GM12878 (cell line): ENCODE measurements at regions of chr7 and their contacts with region 1.

Region 1: GRCh38 chr7:106183952-106184351 is 71.8 kb upstream of the SYPL1 start:
- DNase-seq: no peak
- ATAC-seq: no peak
- H3K4me3 ChIP-seq: no peak overlapping the region
- H3K27ac ChIP-seq: no peak overlapping the region
- H3K4me1 ChIP-seq: peaks cover 12% of the 10 kb centered on the region
- H3K27me3 ChIP-seq: no peaks in the 10 kb centered on the region
- CTCF ChIP-seq: no peak
- EP300 ChIP-seq: no peak
- POLR2A ChIP-seq: no peak
- RAD21 ChIP-seq: no peak

Region 2: DNA sequence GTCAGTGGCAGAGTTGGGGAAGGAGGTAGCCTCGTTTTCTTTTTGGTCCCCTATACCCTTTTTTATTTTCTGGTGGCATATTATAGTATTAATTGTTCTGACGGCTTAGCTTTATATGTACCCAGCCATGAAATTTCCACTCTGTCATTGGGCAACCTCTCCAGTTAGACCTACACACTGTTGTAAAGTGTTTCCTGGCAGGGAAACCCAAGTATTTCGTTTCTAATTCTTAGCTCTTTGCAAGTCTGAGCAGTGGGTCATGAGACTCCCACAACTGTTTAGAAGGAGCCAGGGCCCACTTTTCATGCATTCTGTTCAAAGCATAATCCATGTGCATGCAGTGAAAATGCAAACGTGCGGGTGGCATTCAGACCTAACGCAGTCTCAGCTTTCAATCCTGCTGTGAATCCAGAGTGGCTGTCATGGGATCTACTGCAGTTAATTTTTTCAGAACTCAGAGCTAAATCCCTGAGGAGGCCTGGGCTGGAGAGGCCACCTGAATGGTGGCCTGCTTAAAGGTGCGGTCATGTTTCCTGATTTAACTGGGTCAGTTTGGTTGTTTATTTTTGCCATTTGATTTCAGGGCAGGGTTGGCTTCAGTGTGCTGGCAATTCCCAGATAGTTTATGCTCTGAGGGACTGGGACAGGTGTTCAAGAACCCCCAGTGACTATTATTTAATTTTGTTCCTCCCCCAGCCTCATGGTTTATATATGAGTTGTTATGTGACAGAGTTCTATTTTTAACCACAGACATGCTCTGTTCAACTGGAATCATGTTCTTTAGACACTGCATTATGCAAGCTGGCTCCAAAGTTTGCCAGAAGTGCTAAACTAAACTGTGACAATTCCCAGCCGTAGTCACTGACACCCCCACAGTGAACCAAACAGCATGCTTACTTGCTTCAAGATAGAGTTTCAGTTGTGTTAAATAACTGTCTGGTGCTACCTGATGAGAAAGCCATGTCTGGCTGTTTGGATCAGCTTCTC is 44.4 kb before region 1 on chr7:
- CTCF ChIA-PET with region 1: no interaction called
- POLR2A ChIA-PET with region 1: no interaction called
- RAD21 ChIA-PET with region 1: no interaction called
- SMC1A ChIA-PET with region 1: no interaction called
- in situ Hi-C with region 1: no loop called
- intact Hi-C with region 1: no loop called
- DNase-seq: no peak
- ATAC-seq: no peak
- H3K4me3 ChIP-seq: no peak overlapping the region
- H3K27ac ChIP-seq: no peak overlapping the region
- H3K4me1 ChIP-seq: no peaks in the 10 kb centered on the region
- H3K27me3 ChIP-seq: no peaks in the 10 kb centered on the region
- CTCF ChIP-seq: no peak
- EP300 ChIP-seq: no peak
- POLR2A ChIP-seq: no peak
- RAD21 ChIP-seq: no peak

Region 3: GRCh38 chr7:106367018-106367420 is 183.1 kb after region 1 on chr7:
- CTCF ChIA-PET with region 1: interaction called, 113 read pairs
- POLR2A ChIA-PET with region 1: interaction called, 3 read pairs
- RAD21 ChIA-PET with region 1: interaction called, 82 read pairs
- SMC1A ChIA-PET with region 1: interaction called, 56 read pairs
- in situ Hi-C with region 1: no loop called
- intact Hi-C with region 1: no loop called
- DNase-seq: no peak
- ATAC-seq: peak; percentile 80
- H3K4me3 ChIP-seq: no peak overlapping the region
- H3K27ac ChIP-seq: no peak overlapping the region
- H3K4me1 ChIP-seq: no peaks in the 10 kb centered on the region
- H3K27me3 ChIP-seq: no peaks in the 10 kb centered on the region
- CTCF ChIP-seq: peak; percentile 35 to 48 (median 41); a peak in 5 of 6 replicates
- EP300 ChIP-seq: no peak
- POLR2A ChIP-seq: no peak
- RAD21 ChIP-seq: peak; percentile 75